ENCODE measurements at regions of chr12 and their contacts with region 1.

Region 1: GRCh38 chr12:52884526-52885293 is 20.2 kb downstream of the KRT8 start:
- DNase-seq: peak; percentile 89
- H3K4me3 Mint-ChIP-seq: no peak overlapping the region
- H3K27ac Mint-ChIP-seq: no peak overlapping the region
- H3K4me1 Mint-ChIP-seq: peaks cover 5% of the 10 kb centered on the region
- H3K27me3 Mint-ChIP-seq: no peaks in the 10 kb centered on the region

Region 2: GRCh38 chr12:52895061-52895887 is 10.6 kb after region 1 on chr12:
- CTCF ChIA-PET with region 1: interaction called, 29 read pairs
- intact Hi-C with region 1: no loop called
- DNase-seq: no peak
- H3K4me3 Mint-ChIP-seq: no peak overlapping the region
- H3K27ac Mint-ChIP-seq: no peak overlapping the region
- H3K4me1 Mint-ChIP-seq: no peaks in the 10 kb centered on the region
- H3K27me3 Mint-ChIP-seq: no peaks in the 10 kb centered on the region

Region 3: GRCh38 chr12:52910248-52910883 is 25.7 kb after region 1 on chr12:
- CTCF ChIA-PET with region 1: interaction called, 15 read pairs
- intact Hi-C with region 1: no loop called
- DNase-seq: no peak
- H3K4me3 Mint-ChIP-seq: no peak overlapping the region
- H3K27ac Mint-ChIP-seq: no peak overlapping the region
- H3K4me1 Mint-ChIP-seq: peaks cover 3% of the 10 kb centered on the region
- H3K27me3 Mint-ChIP-seq: no peaks in the 10 kb centered on the region

Region 4: GRCh38 chr12:52942066-52942900 is 57.6 kb after region 1 on chr12:
- CTCF ChIA-PET with region 1: interaction called, 21 read pairs
- intact Hi-C with region 1: no loop called
- DNase-seq: no peak
- H3K4me3 Mint-ChIP-seq: no peak overlapping the region
- H3K27ac Mint-ChIP-seq: no peak overlapping the region
- H3K4me1 Mint-ChIP-seq: no peaks in the 10 kb centered on the region
- H3K27me3 Mint-ChIP-seq: no peaks in the 10 kb centered on the region

Region 5: DNA sequence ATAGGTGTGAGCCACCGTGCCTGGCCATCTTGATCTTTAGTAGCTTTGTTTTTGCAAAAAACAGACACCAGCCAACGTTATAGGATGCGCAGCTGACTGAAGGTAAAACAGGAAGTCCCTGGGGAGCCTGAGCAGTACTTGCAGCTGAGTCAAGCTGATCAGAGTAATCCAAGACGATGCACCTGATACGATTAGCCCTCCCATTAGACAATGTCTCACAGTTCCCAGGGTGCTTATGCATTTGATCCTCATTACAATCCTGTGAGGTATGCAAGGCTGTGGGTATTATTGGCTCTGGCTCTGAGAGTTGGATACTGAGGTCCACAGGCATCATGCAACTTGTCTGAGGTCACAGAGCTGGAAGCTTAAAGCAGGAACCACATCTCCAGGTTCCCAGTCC is 72.3 kb after region 1 on chr12:
- CTCF ChIA-PET with region 1: interaction called, 26 read pairs
- intact Hi-C with region 1: no loop called
- DNase-seq: peak; percentile 27
- H3K4me3 Mint-ChIP-seq: no peak overlapping the region
- H3K27ac Mint-ChIP-seq: no peak overlapping the region
- H3K4me1 Mint-ChIP-seq: peaks cover 5% of the 10 kb centered on the region
- H3K27me3 Mint-ChIP-seq: no peaks in the 10 kb centered on the region

Region 6: GRCh38 chr12:52980693-52981423 is 96.1 kb after region 1 on chr12:
- CTCF ChIA-PET with region 1: interaction called, 369 read pairs
- intact Hi-C with region 1: loop called (anchors 1 kb)
- DNase-seq: peak; percentile 92
- H3K4me3 Mint-ChIP-seq: no peak overlapping the region
- H3K27ac Mint-ChIP-seq: no peak overlapping the region
- H3K4me1 Mint-ChIP-seq: no peaks in the 10 kb centered on the region
- H3K27me3 Mint-ChIP-seq: peaks cover 11% of the 10 kb centered on the region

Region 7: GRCh38 chr12:53005986-53006809 is 121.5 kb after region 1 on chr12 and contains the start of gene EIF4B:
- CTCF ChIA-PET with region 1: interaction called, 10 read pairs
- intact Hi-C with region 1: no loop called
- DNase-seq: peak; percentile 100
- H3K4me3 Mint-ChIP-seq: peak within 1 kb of the TSS; percentile 92
- H3K27ac Mint-ChIP-seq: peak within 1 kb of the TSS; percentile 93
- H3K4me1 Mint-ChIP-seq: peaks cover 47% of the 10 kb centered on the region
- H3K27me3 Mint-ChIP-seq: no peaks in the 10 kb centered on the region
- total RNA-seq, gene EIF4B: 813 to 821 TPM

Measured in activated naive CD4-positive, alpha-beta T cell treated with anti-CD3 and anti-CD28 coated beads for 36 hours (primary cell).